Dorsolateral prefrontal cortex (tissue), 120 donors: ENCODE measurements at regions of chr1 and their contacts with region 1.

Region 1: GRCh38 chr1:61184040-61184713 is 101.8 kb downstream of the NFIA start:
- DNase-seq: peak; percentile 86 to 97 (median 94)
- H3K4me3 ChIP-seq: peak overlapping the region; percentile 39 to 73 (median 56)
- H3K27ac ChIP-seq: peak overlapping the region; percentile 83 to 98 (median 96)
- H3K27me3 ChIP-seq: no peaks in the 10 kb centered on the region
- CTCF ChIP-seq: peak in 11 of 56 donors; percentile 1 to 19 (median 14)

Region 2: DNA sequence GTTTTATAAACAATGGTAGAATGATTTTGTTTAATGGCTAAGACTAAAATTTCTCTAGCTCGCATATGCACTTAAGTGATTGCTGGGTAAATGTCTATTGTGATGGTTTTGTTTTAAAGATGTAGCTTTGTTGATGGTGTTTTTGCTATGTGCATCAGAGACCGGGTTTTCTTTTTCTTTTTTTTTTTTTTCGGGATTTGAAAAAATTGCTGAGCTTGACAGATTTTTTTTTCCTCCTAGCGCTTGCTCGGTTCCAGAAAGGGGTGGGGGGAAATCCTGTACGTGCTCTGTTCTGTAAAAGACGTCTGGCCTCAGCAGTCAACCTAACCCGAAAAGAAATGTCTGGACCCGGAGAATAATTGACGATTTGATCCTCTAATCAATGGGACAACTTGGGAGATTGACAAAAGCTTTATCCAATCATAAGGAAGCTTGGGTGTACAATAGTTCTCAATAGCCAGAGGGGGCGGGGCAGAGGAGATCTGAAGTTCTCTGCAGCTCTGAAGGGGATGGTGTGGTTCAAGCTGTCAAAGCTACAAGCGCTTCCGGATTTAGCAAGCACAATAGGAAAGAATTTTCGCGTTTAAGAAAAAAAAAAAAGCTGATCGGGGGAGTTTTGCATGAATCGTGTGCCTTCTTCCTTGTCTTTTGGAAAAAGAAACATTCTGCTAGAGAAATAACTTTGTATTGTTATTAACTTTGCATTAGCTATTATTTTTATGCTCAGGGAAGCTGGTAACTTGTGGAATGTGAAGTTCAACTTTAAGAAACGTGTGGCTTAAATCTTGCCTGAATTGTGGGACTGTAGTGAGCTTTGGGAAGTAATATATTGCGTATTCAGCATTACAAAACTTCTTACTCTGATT is 106.3 kb before region 1 on chr1:
- intact Hi-C with region 1: loop called (anchors 2 to 5 kb)
- DNase-seq: peak; percentile 56 to 90 (median 86)
- H3K4me3 ChIP-seq: peak overlapping the region; percentile 34 to 93 (median 71)
- H3K27ac ChIP-seq: peak overlapping the region; percentile 83 to 99 (median 96)
- H3K27me3 ChIP-seq: no peaks in the 10 kb centered on the region
- CTCF ChIP-seq: peak in 19 of 56 donors; percentile 5 to 51 (median 17)

Region 3: GRCh38 chr1:61102041-61102440 is 82.1 kb before region 1 on chr1:
- intact Hi-C with region 1: loop called in 1 of 2 experiments (anchors 5 kb)
- DNase-seq: no peak
- H3K4me3 ChIP-seq: peak overlapping the region in 56 of 59 donors; percentile 9 to 63 (median 42)
- H3K27ac ChIP-seq: peak overlapping the region in 57 of 59 donors; percentile 1 to 87 (median 70)
- H3K27me3 ChIP-seq: no peaks in the 10 kb centered on the region
- CTCF ChIP-seq: no peak

Region 4: DNA sequence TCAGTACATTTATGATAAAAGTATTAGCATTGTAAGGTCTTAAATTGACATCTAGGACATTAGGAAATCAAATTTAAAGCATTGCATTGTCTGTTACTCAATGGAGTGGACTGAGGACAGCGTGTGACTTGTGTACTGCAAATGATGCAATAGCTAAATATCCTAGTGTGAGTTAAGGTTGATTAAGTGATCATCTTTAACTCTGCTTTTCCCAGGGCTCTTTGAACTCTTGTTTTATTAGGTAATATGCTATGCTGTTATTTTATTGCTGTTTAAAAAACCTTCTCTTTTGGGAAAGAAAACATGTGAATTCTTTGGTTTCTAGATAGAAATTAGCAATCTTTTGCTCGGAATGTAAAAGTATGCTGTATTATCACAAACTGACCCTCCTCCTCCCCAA is 63.2 kb before region 1 on chr1:
- intact Hi-C with region 1: loop called in 1 of 2 experiments (anchors 5 kb)
- DNase-seq: no peak
- H3K4me3 ChIP-seq: peak overlapping the region in 57 of 59 donors; percentile 0 to 62 (median 38)
- H3K27ac ChIP-seq: peak overlapping the region; percentile 19 to 94 (median 86)
- H3K27me3 ChIP-seq: no peaks in the 10 kb centered on the region
- CTCF ChIP-seq: peak in 2 of 56 donors; percentile 9 to 20

Region 5: DNA sequence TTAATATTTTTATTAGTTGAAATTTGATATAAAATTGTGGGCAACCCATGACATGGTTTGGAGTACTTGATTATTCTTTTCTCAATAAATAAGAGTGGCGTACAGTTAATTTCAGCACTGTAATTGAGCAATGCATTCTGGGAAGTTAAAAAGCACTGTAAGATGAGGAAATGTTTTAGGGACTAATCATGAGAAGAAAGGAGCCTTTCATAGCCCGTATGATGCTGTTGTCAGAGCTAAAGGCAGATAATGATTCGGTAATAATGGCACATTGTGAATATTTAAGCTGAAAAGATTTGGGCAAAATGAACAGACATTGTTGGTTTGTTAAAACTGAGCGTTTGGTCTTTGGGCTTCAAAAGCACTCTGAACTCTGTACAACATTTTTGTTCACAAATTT is 37.5 kb after region 1 on chr1:
- intact Hi-C with region 1: loop called in 1 of 2 experiments (anchors 5 kb)
- DNase-seq: no peak
- H3K4me3 ChIP-seq: peak overlapping the region in 46 of 59 donors; percentile 0 to 55 (median 24)
- H3K27ac ChIP-seq: peak overlapping the region in 58 of 59 donors; percentile 10 to 93 (median 79)
- H3K27me3 ChIP-seq: no peaks in the 10 kb centered on the region
- CTCF ChIP-seq: peak in 2 of 56 donors; percentile 8 to 13

Region 6: GRCh38 chr1:61270761-61271411 is 86.7 kb after region 1 on chr1:
- intact Hi-C with region 1: loop called (anchors 2 to 5 kb)
- DNase-seq: no peak
- H3K4me3 ChIP-seq: no peak overlapping the region
- H3K27ac ChIP-seq: peak overlapping the region in 53 of 59 donors; percentile 3 to 92 (median 79)
- H3K27me3 ChIP-seq: no peaks in the 10 kb centered on the region
- CTCF ChIP-seq: peak in 16 of 56 donors; percentile 8 to 54 (median 28)

Region 7: DNA sequence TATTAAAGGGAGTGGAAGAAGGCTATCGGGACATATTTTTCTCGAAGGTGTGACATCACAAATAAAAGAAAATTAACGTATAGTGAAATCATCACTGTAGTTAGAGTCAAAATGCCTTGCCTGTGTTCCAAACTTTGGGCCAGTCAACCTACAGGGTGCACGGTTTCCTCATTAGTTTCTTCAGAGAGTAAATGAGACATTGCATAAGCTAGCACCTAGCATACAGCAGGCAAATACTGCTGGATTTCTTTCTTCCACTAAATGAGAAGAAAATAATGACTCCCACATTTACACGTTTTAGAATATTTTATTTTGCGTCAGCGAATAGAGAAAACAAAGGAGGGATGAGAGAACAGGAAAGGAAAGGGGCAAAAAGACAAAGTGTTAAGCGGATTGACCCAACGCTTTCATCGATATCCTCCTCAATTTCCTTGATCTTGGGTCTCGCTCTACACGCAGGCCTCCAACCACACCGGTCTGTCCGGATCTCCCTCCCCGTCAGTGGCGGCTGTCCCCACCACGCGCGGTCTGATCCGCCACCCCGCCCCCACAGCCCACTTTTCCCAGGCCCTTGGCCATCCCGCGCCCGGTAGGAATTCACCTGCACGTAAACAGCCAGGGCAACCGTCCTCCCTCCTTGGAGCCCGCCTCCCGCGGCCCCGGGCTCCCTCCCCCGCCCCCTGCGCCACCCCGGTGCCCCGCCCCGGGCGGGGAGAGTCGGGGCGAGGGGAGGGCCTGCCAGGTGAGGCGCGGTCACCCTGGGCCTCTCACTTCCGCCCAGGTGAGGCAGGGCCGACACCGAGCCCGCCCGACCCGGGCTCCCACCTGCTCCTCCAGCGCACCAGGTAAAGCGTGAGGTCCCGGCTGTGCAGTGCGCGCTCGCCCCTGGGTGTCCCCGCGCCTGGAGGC is 557.8 kb after region 1 on chr1 and contains the start of gene PATJ:
- intact Hi-C with region 1: no loop called
- DNase-seq: peak in 8 of 10 donors; percentile 32 to 73 (median 58)
- H3K4me3 ChIP-seq: peak within 1 kb of the TSS; percentile 58 to 96 (median 85)
- H3K27ac ChIP-seq: peak within 1 kb of the TSS; percentile 15 to 98 (median 93)
- H3K27me3 ChIP-seq: no peaks in the 10 kb centered on the region
- CTCF ChIP-seq: peak in 1 of 56 donors; percentile 7
- total RNA-seq, gene PATJ: 12.2 to 32.2 (median 21.0) TPM